Activated T-helper 2 cell treated with anti-CD3 and anti-CD28 coated beads, Interferon-gamma antibody, Interleukin-2, Interleukin-4, amounts not matched to agents 10 μg/mL and 5 μg/mL and 100 μg/mL, durations not matched to agents 14 hours and 24 hours and 36 hours (primary cell): ENCODE measurements at regions of chr10 and their contacts with region 1.

Region 1: DNA sequence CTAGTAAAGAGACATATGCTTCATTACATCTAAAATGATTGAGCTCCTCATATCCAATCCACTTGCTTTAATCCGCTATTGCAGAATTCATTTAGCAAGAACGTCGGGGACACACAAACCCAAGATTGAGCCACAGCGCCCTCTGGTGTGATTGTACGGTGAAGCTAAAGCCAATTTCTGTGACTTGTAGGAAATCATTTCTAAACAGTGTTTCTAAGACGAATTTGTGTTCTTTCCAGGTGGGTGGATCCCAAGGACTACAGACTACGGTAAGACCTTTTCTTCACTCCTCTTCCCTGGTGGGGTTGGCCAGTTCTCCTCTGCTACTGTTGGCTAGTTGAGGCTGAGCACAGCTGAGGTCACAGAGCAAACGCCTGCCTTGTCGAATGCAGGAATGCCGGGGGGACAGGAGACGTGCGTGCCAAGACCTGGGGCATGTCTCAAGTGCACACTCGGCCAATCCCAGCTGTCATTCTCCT is 5.2 kb downstream of the DMBT1 start:
- DNase-seq: peak; percentile 36
- H3K4me3 Mint-ChIP-seq: no peak overlapping the region
- H3K27ac Mint-ChIP-seq: no peak overlapping the region
- H3K4me1 Mint-ChIP-seq: peaks cover 3% of the 10 kb centered on the region
- H3K27me3 Mint-ChIP-seq: peaks cover 20% of the 10 kb centered on the region

Region 2: GRCh38 chr10:121886997-121887622 is 678.7 kb before region 1 on chr10:
- intact Hi-C with region 1: no loop called
- DNase-seq: peak; percentile 12
- H3K4me3 Mint-ChIP-seq: no peak overlapping the region
- H3K27ac Mint-ChIP-seq: no peak overlapping the region
- H3K4me1 Mint-ChIP-seq: peaks cover 4% of the 10 kb centered on the region
- H3K27me3 Mint-ChIP-seq: no peaks in the 10 kb centered on the region

Region 3: GRCh38 chr10:122298598-122299301 is 267.0 kb before region 1 on chr10:
- intact Hi-C with region 1: loop called (anchors 1 kb)
- DNase-seq: peak; percentile 34
- H3K4me3 Mint-ChIP-seq: no peak overlapping the region
- H3K27ac Mint-ChIP-seq: no peak overlapping the region
- H3K4me1 Mint-ChIP-seq: peaks cover 10% of the 10 kb centered on the region
- H3K27me3 Mint-ChIP-seq: peaks cover 6% of the 10 kb centered on the region

Region 4: GRCh38 chr10:122435212-122435827 is 130.4 kb before region 1 on chr10:
- intact Hi-C with region 1: loop called (anchors 5 kb)
- DNase-seq: no peak
- H3K4me3 Mint-ChIP-seq: no peak overlapping the region
- H3K27ac Mint-ChIP-seq: no peak overlapping the region
- H3K4me1 Mint-ChIP-seq: no peaks in the 10 kb centered on the region
- H3K27me3 Mint-ChIP-seq: peaks cover 3% of the 10 kb centered on the region

Region 5: DNA sequence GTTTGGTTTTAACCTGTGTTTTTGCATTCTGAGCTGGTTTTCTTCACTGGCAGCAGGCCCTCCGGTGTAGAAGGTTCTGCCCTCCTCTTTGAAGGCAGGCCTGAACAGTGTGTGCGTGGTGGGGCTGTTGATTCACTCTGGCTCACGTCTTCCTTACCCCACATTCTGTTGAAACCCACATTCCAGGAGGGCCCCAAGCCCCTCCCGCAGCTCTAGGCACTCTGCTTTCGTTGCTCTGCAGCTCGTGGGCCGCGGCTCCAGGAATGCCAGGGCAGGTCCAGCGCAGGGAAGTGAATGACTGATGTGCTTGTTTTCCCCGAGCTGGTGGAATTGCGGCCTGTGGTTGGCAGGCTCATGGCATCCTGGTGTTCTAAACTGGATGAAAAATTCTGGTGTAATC is 55.4 kb before region 1 on chr10:
- intact Hi-C with region 1: loop called (anchors 5 kb)
- DNase-seq: no peak
- H3K4me3 Mint-ChIP-seq: no peak overlapping the region
- H3K27ac Mint-ChIP-seq: no peak overlapping the region
- H3K4me1 Mint-ChIP-seq: peaks cover 2% of the 10 kb centered on the region
- H3K27me3 Mint-ChIP-seq: peaks cover 1% of the 10 kb centered on the region

Region 6: DNA sequence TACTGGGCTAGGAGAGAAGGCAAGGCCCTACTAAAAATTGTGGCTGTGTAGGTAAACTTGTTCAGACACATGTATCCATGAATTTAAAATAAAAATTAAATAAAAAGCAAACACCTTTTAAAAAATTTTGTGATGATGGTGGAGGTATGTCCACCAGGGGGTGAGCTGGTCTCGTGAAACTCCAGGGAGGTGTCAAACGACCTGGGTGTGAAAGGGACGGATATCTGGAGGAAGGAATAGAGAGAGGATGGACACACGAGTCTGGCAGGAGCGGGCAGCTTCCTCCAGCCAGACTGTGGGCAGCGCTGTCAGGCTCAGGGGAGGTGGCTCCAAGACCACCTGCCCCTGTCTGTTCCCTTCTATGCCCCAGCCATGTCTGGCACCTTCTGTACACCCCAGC is 40.0 kb before region 1 on chr10:
- intact Hi-C with region 1: loop called (anchors 5 kb)
- DNase-seq: no peak
- H3K4me3 Mint-ChIP-seq: no peak overlapping the region
- H3K27ac Mint-ChIP-seq: no peak overlapping the region
- H3K4me1 Mint-ChIP-seq: no peaks in the 10 kb centered on the region
- H3K27me3 Mint-ChIP-seq: peaks cover 30% of the 10 kb centered on the region